WTC11 (cell line): ENCODE measurements at regions of chr9 and their contacts with region 1.

Region 1: GRCh38 chr9:78707481-78707991 is 410.6 kb downstream of the PSAT1 start:
- DNase-seq: no peak
- ATAC-seq: no peak
- H3K4me3 Mint-ChIP-seq: no peak overlapping the region
- H3K27ac Mint-ChIP-seq: peak overlapping the region; percentile 2; the same call in 1 of the 2 replicates
- H3K4me1 Mint-ChIP-seq: peaks cover 8% of the 10 kb centered on the region
- H3K27me3 Mint-ChIP-seq: no peaks in the 10 kb centered on the region
- CTCF ChIP-seq: no peak

Region 2: GRCh38 chr9:78601957-78602565 is 105.5 kb before region 1 on chr9:
- CTCF ChIA-PET with region 1: interaction called, 12 read pairs
- POLR2A ChIA-PET with region 1: interaction called, 4 read pairs
- DNase-seq: peak; percentile 36
- ATAC-seq: peak; percentile 50; the same call in 1 of the 2 replicates
- H3K4me3 Mint-ChIP-seq: no peak overlapping the region
- H3K27ac Mint-ChIP-seq: no peak overlapping the region
- H3K4me1 Mint-ChIP-seq: peaks cover 22% of the 10 kb centered on the region
- H3K27me3 Mint-ChIP-seq: no peaks in the 10 kb centered on the region
- CTCF ChIP-seq: peak; percentile 66

Region 3: DNA sequence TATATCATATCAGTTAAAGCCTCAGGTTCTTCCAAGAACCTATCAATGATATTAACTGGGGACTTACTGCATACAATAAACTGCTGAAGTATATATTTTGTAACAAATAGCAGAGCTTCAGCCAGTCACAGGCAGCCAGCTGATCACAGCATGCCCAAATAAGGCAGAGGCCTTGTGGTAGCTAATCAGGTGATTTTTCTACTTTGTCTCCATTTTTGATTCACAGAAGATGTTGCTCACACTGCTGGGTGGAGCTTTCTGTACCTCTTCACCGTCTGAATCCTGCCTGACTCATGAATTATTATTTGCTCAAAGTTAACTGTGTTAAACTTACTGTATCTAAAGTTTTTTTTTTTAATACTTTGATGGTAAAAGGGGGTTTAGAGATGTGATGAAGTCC is 53.2 kb before region 1 on chr9:
- CTCF ChIA-PET with region 1: no interaction called
- POLR2A ChIA-PET with region 1: no interaction called
- DNase-seq: no peak
- ATAC-seq: no peak
- H3K4me3 Mint-ChIP-seq: no peak overlapping the region
- H3K27ac Mint-ChIP-seq: no peak overlapping the region
- H3K4me1 Mint-ChIP-seq: 0 out of 2 replicates have a peak, but pooled peaks cover 4% of the 10 kb centered on the region
- H3K27me3 Mint-ChIP-seq: no peaks in the 10 kb centered on the region
- CTCF ChIP-seq: no peak

Region 4: GRCh38 chr9:78692871-78693270 is 14.7 kb before region 1 on chr9:
- CTCF ChIA-PET with region 1: interaction called, 10 read pairs
- POLR2A ChIA-PET with region 1: no interaction called
- DNase-seq: no peak
- ATAC-seq: no peak
- H3K4me3 Mint-ChIP-seq: no peak overlapping the region
- H3K27ac Mint-ChIP-seq: no peak overlapping the region
- H3K4me1 Mint-ChIP-seq: peaks cover 11% of the 10 kb centered on the region
- H3K27me3 Mint-ChIP-seq: no peaks in the 10 kb centered on the region; the same call in 1 of the 2 replicates
- CTCF ChIP-seq: no peak

Region 5: GRCh38 chr9:79040671-79041070 is 333.1 kb after region 1 on chr9:
- CTCF ChIA-PET with region 1: no interaction called
- POLR2A ChIA-PET with region 1: no interaction called
- DNase-seq: no peak
- ATAC-seq: no peak
- H3K4me3 Mint-ChIP-seq: no peak overlapping the region
- H3K27ac Mint-ChIP-seq: no peak overlapping the region
- H3K4me1 Mint-ChIP-seq: peaks cover 22% of the 10 kb centered on the region
- H3K27me3 Mint-ChIP-seq: no peaks in the 10 kb centered on the region
- CTCF ChIP-seq: no peak